Psoas muscle (tissue), 8 donors: ENCODE measurements at regions of chr4 and their contacts with region 1.

Region 1: GRCh38 chr4:26787461-26788340 is 72.9 kb upstream of the STIM2 start:
- DNase-seq: peak; percentile 43 to 78
- ATAC-seq: peak; percentile 67 to 87 (median 79)
- H3K4me3 ChIP-seq: peak overlapping the region; percentile 45
- H3K27ac ChIP-seq: peak overlapping the region; percentile 75
- H3K4me1 ChIP-seq: peaks cover 30% of the 10 kb centered on the region
- H3K27me3 ChIP-seq: no peaks in the 10 kb centered on the region
- CTCF ChIP-seq: peak; percentile 51

Region 2: DNA sequence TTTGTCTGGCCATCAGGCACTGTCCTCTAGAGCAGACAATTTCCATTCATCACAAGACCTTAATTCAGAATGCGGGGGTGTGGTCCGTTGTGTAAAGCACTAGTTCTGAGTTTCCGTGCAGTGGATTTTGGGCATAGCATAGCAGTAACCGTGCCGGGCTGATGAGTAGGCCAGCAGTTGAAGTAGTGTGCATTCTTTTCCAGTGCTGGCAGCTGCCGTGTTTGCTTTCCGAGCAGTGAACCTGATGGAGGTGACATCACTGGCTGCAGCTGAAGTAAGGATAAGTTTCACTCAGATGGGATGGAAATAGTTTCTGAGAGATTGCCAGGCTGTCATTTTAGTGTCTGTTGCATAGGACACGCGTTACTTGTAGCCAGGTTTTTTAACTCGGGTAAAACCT is 34.1 kb before region 1 on chr4:
- intact Hi-C with region 1: loop called in 1 of 2 experiments (anchors 2 kb)
- DNase-seq: peak; percentile 54 to 80
- ATAC-seq: peak; percentile 96 to 98 (median 98)
- H3K4me3 ChIP-seq: peak overlapping the region; percentile 37
- H3K27ac ChIP-seq: peak overlapping the region; percentile 76
- H3K4me1 ChIP-seq: peaks cover 33% of the 10 kb centered on the region
- H3K27me3 ChIP-seq: no peaks in the 10 kb centered on the region
- CTCF ChIP-seq: no peak

Region 3: DNA sequence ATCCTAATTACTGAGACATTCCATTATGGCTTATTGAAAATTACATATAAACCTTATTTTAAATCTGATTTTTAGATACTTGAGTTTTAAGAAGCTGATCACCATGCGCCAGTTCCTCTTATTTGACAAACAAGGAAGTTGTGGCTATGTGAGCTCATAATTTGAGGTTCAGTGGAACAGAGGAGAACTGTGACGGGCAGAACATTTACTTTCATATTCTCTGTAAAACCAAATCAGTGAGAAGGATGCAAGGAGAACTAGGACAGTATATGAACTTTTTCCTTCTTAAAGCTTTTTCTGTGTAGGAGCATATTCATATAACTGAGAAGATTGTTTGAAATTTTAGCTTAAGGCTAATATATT is 98.2 kb after region 1 on chr4:
- intact Hi-C with region 1: no loop called
- DNase-seq: no peak
- ATAC-seq: no peak
- H3K4me3 ChIP-seq: no peak overlapping the region
- H3K27ac ChIP-seq: no peak overlapping the region
- H3K4me1 ChIP-seq: peaks cover 21% of the 10 kb centered on the region
- H3K27me3 ChIP-seq: no peaks in the 10 kb centered on the region
- CTCF ChIP-seq: no peak

Region 4: GRCh38 chr4:27000820-27001219 is 213.1 kb after region 1 on chr4:
- intact Hi-C with region 1: loop called (anchors 10 kb)
- DNase-seq: no peak
- ATAC-seq: no peak
- H3K4me3 ChIP-seq: no peak overlapping the region
- H3K27ac ChIP-seq: no peak overlapping the region
- H3K4me1 ChIP-seq: no peaks in the 10 kb centered on the region
- H3K27me3 ChIP-seq: no peaks in the 10 kb centered on the region
- CTCF ChIP-seq: peak; percentile 11

Region 5: DNA sequence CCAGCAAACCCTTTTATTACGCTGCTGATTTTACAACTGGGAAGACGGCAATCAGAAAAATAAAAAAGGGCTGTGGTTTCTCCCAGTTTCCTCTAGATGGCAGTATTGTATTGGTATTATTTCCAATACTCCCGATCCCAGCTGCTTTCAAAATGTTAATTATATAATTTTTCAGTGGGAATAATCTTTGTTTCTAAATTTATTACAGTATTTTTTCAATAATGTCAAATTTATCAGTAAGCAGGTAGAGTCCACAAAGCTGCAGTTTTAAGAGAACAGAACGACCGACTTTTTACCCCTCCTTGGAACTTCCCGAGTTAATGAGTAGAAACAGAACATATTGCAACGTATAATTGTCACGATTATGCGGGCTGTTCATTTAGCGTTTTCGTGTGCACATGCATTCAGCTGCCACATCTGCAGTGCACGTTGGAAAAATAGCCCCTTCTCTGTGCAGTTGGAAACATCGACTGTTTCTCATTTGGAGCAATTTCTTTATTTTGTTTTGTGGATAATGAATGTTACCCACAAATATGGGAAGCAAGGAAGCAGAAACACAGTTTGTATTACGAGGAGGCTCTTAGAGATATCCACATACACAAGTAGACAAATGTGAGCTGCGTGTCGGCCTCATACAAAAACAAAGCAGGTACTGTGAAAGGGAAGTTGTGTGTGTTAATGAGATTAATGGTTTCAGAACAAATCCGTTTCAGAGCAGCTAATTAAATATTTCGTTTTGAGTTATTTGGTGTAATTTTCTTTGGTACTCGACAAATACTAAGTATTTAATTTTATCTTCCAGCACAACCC is 260.9 kb after region 1 on chr4:
- intact Hi-C with region 1: no loop called
- DNase-seq: no peak
- ATAC-seq: peak in 1 of 4 donors; percentile 61
- H3K4me3 ChIP-seq: peak overlapping the region; percentile 58
- H3K27ac ChIP-seq: no peak overlapping the region
- H3K4me1 ChIP-seq: no peaks in the 10 kb centered on the region
- H3K27me3 ChIP-seq: peaks cover 0 to 16% (median 0%) of the 10 kb centered on the region in 3 donors
- CTCF ChIP-seq: peak; percentile 80